Breast epithelium (tissue), 4 donors: ENCODE measurements at regions of chr6 and their contacts with region 1.

Region 1: GRCh38 chr6:169200893-169201514 is 52.6 kb downstream of the THBS2 start:
- DNase-seq: no peak
- H3K4me3 ChIP-seq: no peak overlapping the region
- H3K27ac ChIP-seq: no peak overlapping the region
- H3K4me1 ChIP-seq: no peaks in the 10 kb centered on the region
- H3K27me3 ChIP-seq: no peaks in the 10 kb centered on the region
- CTCF ChIP-seq: no peak
- POLR2A ChIP-seq: no peak

Region 2: DNA sequence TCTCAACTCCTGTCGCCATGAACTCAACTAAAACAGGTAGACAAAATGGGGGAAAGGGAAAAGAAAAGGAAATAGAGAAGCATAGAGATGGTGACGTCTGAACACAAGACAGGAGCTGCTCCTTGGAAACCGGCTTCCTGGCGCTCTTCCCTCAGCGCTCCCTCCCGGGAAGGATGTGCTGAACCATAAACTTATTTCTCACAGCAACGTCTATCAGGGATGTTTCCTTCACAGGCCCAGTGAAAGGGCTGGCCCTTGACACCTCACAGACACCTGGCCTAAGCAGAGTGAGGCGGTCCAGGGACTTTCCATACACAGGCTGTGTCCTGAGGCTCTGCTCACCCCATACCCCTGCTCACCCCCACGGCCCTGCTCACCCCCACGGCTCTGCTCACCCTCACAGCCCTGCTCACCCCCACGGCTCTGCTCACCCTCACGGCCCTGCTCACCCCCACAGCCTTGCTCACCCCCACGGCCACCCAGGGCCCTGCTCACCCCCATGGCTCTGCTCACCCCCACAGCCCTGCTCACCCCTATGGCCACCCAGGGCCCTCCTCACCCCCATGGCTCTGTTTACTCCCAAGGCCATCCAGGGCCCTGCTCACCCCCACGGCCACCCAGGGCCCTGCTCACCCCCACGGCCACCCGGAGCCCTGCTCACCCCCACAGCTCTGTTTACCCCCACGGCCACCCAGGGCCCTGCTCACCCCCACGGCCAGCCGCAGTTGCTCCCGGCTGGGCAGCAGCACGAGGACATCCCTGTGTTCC is 1122.6 kb before region 1 on chr6:
- intact Hi-C with region 1: loop called (anchors 5 kb)
- DNase-seq: no peak
- H3K4me3 ChIP-seq: no peak overlapping the region
- H3K27ac ChIP-seq: no peak overlapping the region
- H3K4me1 ChIP-seq: no peaks in the 10 kb centered on the region
- H3K27me3 ChIP-seq: no peaks in the 10 kb centered on the region
- CTCF ChIP-seq: no peak
- POLR2A ChIP-seq: no peak

Region 3: DNA sequence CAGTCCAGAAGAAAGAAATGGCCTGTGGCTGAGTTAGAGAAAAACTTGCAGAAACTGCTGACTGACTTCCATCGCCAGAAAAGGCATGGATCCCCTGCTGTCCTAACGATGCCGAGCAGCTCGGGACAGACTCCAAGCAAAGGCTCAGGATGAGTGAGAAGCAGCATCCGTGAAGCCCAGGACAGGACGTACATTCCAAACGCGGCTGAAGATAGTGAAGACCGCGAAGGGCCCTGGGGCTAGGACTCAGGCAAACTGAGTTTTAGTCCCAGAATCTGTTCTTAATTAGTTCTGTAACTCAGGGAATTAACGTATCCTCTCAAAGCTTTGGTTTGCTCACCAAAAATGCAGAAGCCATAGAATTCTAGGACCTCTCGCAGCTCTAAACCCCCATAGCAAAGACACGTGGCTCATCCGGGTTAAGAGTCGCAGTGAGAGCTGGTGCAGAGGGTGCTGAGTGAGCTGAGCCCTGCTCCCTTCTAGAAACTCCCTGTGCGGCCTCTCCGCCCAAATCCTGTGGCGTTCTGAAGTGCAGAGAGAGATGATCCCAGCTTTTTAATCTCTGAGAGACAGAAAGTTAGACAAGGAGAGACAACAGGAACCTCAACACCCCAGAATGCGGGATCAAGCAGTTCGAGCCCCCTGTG is 185.5 kb after region 1 on chr6:
- intact Hi-C with region 1: no loop called
- DNase-seq: no peak
- H3K4me3 ChIP-seq: no peak overlapping the region
- H3K27ac ChIP-seq: peak overlapping the region; percentile 45 to 75
- H3K4me1 ChIP-seq: no peaks in the 10 kb centered on the region
- H3K27me3 ChIP-seq: no peaks in the 10 kb centered on the region
- CTCF ChIP-seq: no peak
- POLR2A ChIP-seq: no peak

Region 4: GRCh38 chr6:170087941-170088581 is 887.1 kb after region 1 on chr6:
- intact Hi-C with region 1: no loop called
- DNase-seq: peak in 1 of 2 donors; percentile 37
- H3K4me3 ChIP-seq: peak overlapping the region in 1 of 3 donors; percentile 37
- H3K27ac ChIP-seq: peak overlapping the region in 1 of 2 donors; percentile 55
- H3K4me1 ChIP-seq: no peaks in the 10 kb centered on the region
- H3K27me3 ChIP-seq: no peaks in the 10 kb centered on the region
- CTCF ChIP-seq: no peak
- POLR2A ChIP-seq: no peak